Naive thymus-derived CD4-positive, alpha-beta T cell (primary cell): ENCODE measurements at regions of chr6 and their contacts with region 1.

Region 1: DNA sequence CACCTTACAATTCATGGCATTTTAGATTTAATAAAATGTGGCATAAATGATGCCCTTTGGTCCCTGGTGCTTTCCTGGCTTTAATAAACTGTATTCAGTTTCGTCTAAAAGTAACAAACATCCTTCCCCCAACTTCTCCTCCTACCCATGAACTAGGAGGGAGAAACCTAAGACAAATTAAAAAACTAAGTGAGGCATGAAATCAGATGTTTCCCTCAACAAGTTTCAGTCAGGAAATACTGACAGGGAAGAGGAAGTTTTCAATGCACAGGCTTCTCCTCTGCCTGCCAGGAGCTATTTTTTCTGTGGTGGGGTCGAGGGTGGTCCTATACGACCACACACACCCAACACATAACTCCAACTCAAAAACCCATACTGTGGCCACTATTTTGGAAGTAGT is 10.0 kb downstream of the HBS1L start:
- DNase-seq: no peak
- ATAC-seq: peak; percentile 10
- H3K4me3 ChIP-seq: no peak overlapping the region
- H3K4me3 Mint-ChIP-seq: peak overlapping the region in 7 of 10 donors; percentile 4 to 56 (median 39)
- H3K27ac ChIP-seq: peak overlapping the region; percentile 58
- H3K27ac Mint-ChIP-seq: peak overlapping the region; percentile 17 to 81 (median 61)
- H3K4me1 ChIP-seq: peaks cover 11 to 36% of the 10 kb centered on the region in 2 donors
- H3K4me1 Mint-ChIP-seq: peaks cover 41 to 83% (median 73%) of the 10 kb centered on the region in 7 donors
- H3K27me3 ChIP-seq: no peaks in the 10 kb centered on the region
- H3K27me3 Mint-ChIP-seq: no peaks in the 10 kb centered on the region

Region 2: DNA sequence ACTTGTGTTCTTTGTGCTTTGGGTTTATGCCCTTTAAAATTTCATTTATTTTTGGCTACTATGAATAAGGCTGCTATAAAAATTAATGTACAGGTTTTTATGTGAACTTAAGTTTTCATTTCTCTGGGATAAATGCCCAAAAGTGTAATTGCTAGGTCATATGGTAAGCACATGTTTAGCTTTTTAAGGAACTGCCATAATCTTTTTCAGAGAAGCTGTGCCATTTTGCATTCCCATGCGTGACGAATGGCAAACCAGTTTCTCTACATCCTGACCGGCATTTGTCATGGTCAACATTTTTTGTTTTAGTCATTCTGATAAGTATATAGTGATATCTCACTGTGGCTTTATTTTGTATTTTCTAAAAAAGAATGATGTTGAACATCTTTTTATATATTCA is 490.7 kb before region 1 on chr6:
- CTCF ChIA-PET with region 1: no interaction called
- POLR2A ChIA-PET with region 1: no interaction called
- intact Hi-C with region 1: no loop called
- DNase-seq: no peak
- ATAC-seq: no peak
- H3K4me3 ChIP-seq: no peak overlapping the region
- H3K4me3 Mint-ChIP-seq: no peak overlapping the region
- H3K27ac ChIP-seq: no peak overlapping the region
- H3K27ac Mint-ChIP-seq: no peak overlapping the region
- H3K4me1 ChIP-seq: no peaks in the 10 kb centered on the region
- H3K4me1 Mint-ChIP-seq: no peaks in the 10 kb centered on the region
- H3K27me3 ChIP-seq: no peaks in the 10 kb centered on the region
- H3K27me3 Mint-ChIP-seq: peaks cover 0 to 20% (median 0%) of the 10 kb centered on the region in 5 donors

Region 3: DNA sequence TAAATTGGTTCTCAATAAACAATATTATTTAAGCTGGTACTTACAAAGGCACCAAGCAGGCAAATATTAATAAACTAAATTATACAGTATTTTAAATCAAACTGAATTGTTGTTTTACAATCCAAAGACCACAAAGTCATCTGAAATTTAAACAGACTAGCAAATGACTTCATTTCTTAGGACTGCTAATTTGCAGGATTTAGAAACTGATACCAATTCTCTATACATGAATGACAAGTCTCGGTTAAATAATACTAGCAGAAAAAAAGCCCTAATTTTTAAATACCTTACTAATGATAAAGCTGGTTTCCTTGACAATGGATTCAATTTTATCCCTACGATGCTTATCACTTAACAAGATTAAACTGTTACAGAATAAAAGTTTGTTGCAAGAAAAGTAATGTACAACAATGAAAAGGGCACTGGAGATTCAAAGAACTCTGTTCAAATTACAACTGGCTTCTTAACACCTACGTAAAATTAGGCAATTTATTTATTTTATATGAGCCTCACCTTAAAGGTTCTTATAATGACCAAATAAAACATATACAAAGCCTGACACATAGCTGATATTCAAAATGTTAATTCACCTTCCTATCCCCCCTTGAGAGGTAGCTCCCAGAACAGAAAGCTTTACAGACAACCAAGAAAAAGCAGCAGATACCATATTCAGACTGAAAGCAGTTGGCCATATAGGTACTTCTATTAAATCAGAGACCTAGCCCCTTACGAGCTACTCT is 23.2 kb before region 1 on chr6:
- CTCF ChIA-PET with region 1: no interaction called
- POLR2A ChIA-PET with region 1: interaction called, 5 read pairs
- intact Hi-C with region 1: loop called in 1 of 2 experiments (anchors 2 kb)
- DNase-seq: no peak
- ATAC-seq: no peak
- H3K4me3 ChIP-seq: no peak overlapping the region
- H3K4me3 Mint-ChIP-seq: peak overlapping the region in 9 of 10 donors; percentile 2 to 75 (median 65)
- H3K27ac ChIP-seq: peak overlapping the region; percentile 57
- H3K27ac Mint-ChIP-seq: peak overlapping the region in 7 of 9 donors; percentile 19 to 91 (median 84)
- H3K4me1 ChIP-seq: peaks cover 0 to 43% of the 10 kb centered on the region in 2 donors
- H3K4me1 Mint-ChIP-seq: peaks cover 20 to 88% (median 77%) of the 10 kb centered on the region in 7 donors
- H3K27me3 ChIP-seq: no peaks in the 10 kb centered on the region
- H3K27me3 Mint-ChIP-seq: no peaks in the 10 kb centered on the region

Region 4: DNA sequence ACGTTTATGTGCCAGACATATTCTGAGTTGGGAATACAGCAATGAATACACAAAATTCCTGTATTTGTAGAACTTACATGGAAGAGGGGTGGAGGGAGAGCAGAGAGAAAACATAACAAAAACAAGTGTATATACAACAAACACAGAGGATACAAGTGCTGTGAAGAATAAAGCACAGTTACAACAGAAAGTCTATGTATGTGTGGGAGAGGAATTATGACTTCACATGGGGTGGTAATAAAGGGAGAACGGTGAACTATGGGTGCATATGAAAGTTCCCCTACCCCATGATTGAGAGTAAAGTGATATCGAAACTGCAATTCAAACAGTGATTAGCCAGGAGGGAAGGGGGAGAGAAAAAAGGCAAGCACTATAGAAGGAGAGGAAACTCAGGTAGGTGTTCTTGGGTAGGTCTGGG is 14.6 kb before region 1 on chr6:
- CTCF ChIA-PET with region 1: no interaction called
- POLR2A ChIA-PET with region 1: interaction called, 4 read pairs
- intact Hi-C with region 1: loop called in 1 of 2 experiments (anchors 1 kb)
- DNase-seq: peak in 7 of 9 donors; percentile 29 to 61 (median 45)
- ATAC-seq: peak; percentile 91
- H3K4me3 ChIP-seq: peak overlapping the region; percentile 36
- H3K4me3 Mint-ChIP-seq: peak overlapping the region; percentile 60 to 79 (median 65)
- H3K27ac ChIP-seq: peak overlapping the region; percentile 65
- H3K27ac Mint-ChIP-seq: peak overlapping the region; percentile 60 to 97 (median 86)
- H3K4me1 ChIP-seq: peaks cover 7 to 11% of the 10 kb centered on the region in 2 donors
- H3K4me1 Mint-ChIP-seq: peaks cover 31 to 92% (median 79%) of the 10 kb centered on the region in 7 donors
- H3K27me3 ChIP-seq: no peaks in the 10 kb centered on the region
- H3K27me3 Mint-ChIP-seq: no peaks in the 10 kb centered on the region

Region 5: DNA sequence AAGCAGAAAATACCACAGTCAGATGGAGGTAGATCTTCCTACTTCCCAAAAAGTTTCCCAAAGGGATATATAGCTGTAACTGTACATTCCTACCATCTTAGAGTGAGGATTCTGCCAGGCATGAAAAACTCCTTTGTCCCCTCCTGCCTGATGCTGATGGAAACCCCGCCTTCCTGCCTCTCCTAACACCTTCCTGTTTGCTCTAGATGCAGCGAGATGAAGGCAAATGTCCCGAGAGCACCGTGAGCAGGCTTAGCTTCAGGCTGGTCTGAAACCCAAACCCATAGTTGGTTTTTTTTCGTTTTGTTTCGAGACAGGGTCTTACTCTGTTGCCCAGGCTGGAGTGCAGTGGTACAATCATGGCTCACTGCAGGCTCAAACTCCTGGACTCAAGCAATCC is 192.1 kb after region 1 on chr6:
- CTCF ChIA-PET with region 1: interaction called, 13 read pairs
- POLR2A ChIA-PET with region 1: no interaction called
- intact Hi-C with region 1: no loop called
- DNase-seq: no peak
- ATAC-seq: no peak
- H3K4me3 ChIP-seq: no peak overlapping the region
- H3K4me3 Mint-ChIP-seq: no peak overlapping the region
- H3K27ac ChIP-seq: no peak overlapping the region
- H3K27ac Mint-ChIP-seq: peak overlapping the region in 1 of 9 donors; percentile 7
- H3K4me1 ChIP-seq: peaks cover 0 to 5% of the 10 kb centered on the region in 2 donors
- H3K4me1 Mint-ChIP-seq: peaks cover 4 to 26% (median 6%) of the 10 kb centered on the region in 7 donors
- H3K27me3 ChIP-seq: no peaks in the 10 kb centered on the region
- H3K27me3 Mint-ChIP-seq: peaks cover 0 to 7% (median 0%) of the 10 kb centered on the region in 5 donors

Region 6: DNA sequence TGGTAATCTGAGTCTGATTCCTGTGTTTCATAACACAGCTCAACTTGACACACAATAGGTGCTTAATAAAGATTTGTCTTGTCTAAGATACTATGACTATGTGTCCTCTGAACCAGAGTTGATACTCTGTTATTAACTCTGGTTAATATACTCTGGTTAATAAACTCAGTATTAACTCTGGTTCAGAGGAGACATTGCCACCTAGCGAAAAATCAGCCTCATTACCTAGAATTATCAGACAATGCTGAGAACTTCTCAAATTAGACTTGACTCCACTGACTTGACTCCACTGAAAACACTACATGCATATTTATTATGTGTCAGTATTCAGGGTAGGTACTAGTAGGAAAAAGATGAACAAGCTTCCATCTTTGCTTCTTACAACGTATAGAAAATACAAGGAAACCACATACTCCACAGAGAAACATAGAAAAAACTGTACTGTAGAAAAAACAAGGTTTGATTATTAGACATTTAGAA is 379.1 kb after region 1 on chr6:
- CTCF ChIA-PET with region 1: no interaction called
- POLR2A ChIA-PET with region 1: no interaction called
- intact Hi-C with region 1: loop called in 1 of 2 experiments (anchors 10 kb)
- DNase-seq: peak in 5 of 9 donors; percentile 4 to 31 (median 18)
- ATAC-seq: peak; percentile 67
- H3K4me3 ChIP-seq: no peak overlapping the region
- H3K4me3 Mint-ChIP-seq: no peak overlapping the region
- H3K27ac ChIP-seq: no peak overlapping the region
- H3K27ac Mint-ChIP-seq: peak overlapping the region in 1 of 9 donors; percentile 1
- H3K4me1 ChIP-seq: no peaks in the 10 kb centered on the region
- H3K4me1 Mint-ChIP-seq: peaks cover 0 to 14% (median 4%) of the 10 kb centered on the region in 7 donors
- H3K27me3 ChIP-seq: no peaks in the 10 kb centered on the region
- H3K27me3 Mint-ChIP-seq: no peaks in the 10 kb centered on the region

Region 7: GRCh38 chr6:135693811-135694370 is 649.3 kb after region 1 on chr6:
- CTCF ChIA-PET with region 1: no interaction called
- POLR2A ChIA-PET with region 1: no interaction called
- intact Hi-C with region 1: no loop called
- DNase-seq: no peak
- ATAC-seq: no peak
- H3K4me3 ChIP-seq: no peak overlapping the region
- H3K4me3 Mint-ChIP-seq: no peak overlapping the region
- H3K27ac ChIP-seq: no peak overlapping the region
- H3K27ac Mint-ChIP-seq: no peak overlapping the region
- H3K4me1 ChIP-seq: no peaks in the 10 kb centered on the region
- H3K4me1 Mint-ChIP-seq: peaks cover 0 to 7% (median 0%) of the 10 kb centered on the region in 7 donors
- H3K27me3 ChIP-seq: no peaks in the 10 kb centered on the region
- H3K27me3 Mint-ChIP-seq: peaks cover 0 to 4% (median 0%) of the 10 kb centered on the region in 5 donors